CD8-positive, alpha-beta memory T cell (primary cell): ENCODE measurements at regions of chr9 and their contacts with region 1.

Region 1: GRCh38 chr9:114691046-114691955 is 9.3 kb upstream of the TEX48 start:
- DNase-seq: peak; percentile 12 to 84 (median 37)
- H3K4me3 ChIP-seq: peak overlapping the region; percentile 18
- H3K4me3 Mint-ChIP-seq: peak overlapping the region; percentile 2 to 82 (median 63)
- H3K27ac ChIP-seq: no peak overlapping the region
- H3K27ac Mint-ChIP-seq: peak overlapping the region; percentile 65 to 97 (median 86)
- H3K4me1 ChIP-seq: peaks cover 16% of the 10 kb centered on the region
- H3K4me1 Mint-ChIP-seq: peaks cover 33 to 54% (median 46%) of the 10 kb centered on the region in 3 donors
- H3K27me3 ChIP-seq: no peaks in the 10 kb centered on the region
- H3K27me3 Mint-ChIP-seq: peaks cover 0 to 3% of the 10 kb centered on the region in 2 donors

Region 2: GRCh38 chr9:115046199-115046598 is 354.9 kb after region 1 on chr9:
- CTCF ChIA-PET with region 1: no interaction called
- POLR2A ChIA-PET with region 1: interaction called, 11 read pairs
- DNase-seq: no peak
- H3K4me3 ChIP-seq: no peak overlapping the region
- H3K4me3 Mint-ChIP-seq: no peak overlapping the region
- H3K27ac ChIP-seq: no peak overlapping the region
- H3K27ac Mint-ChIP-seq: no peak overlapping the region
- H3K4me1 ChIP-seq: no peaks in the 10 kb centered on the region
- H3K4me1 Mint-ChIP-seq: no peaks in the 10 kb centered on the region
- H3K27me3 ChIP-seq: no peaks in the 10 kb centered on the region
- H3K27me3 Mint-ChIP-seq: peaks cover 8 to 43% of the 10 kb centered on the region in 2 donors